ENCODE measurements at regions of chr14 and their contacts with region 1.

Region 1: DNA sequence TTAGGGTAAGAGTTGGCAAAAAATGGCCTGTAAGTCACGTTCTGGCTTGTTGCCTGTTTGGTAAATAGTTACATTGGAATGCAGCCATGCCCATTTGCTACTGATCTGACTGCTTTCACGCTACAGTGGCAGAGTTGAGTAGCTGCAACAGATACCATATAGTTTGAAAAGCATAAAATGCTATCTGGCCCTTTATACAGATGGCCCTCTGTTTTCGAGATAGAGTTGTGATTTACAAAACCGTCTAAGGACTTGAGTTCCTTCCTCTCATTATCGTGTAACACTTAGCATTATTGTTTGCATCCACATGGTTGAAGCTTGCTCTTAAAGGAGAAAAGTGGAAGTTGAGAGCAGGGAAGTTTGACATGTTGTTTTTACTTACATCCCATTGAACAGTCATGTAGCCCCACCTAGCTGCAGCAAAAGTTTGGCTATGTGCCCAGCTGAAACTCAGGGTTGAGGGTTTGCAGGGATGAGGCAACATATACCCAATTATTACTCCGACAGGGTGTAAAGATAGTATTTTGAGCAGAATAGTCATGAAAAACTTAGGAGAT is 11.3 kb upstream of the SCFD1 start:
- DNase-seq: peak; percentile 66
- H3K4me3 Mint-ChIP-seq: no peak overlapping the region
- H3K27ac Mint-ChIP-seq: no peak overlapping the region
- H3K4me1 Mint-ChIP-seq: peaks cover 38% of the 10 kb centered on the region
- H3K27me3 Mint-ChIP-seq: no peaks in the 10 kb centered on the region
- CTCF ChIP-seq: no peak

Region 2: GRCh38 chr14:30375296-30375892 is 235.5 kb before region 1 on chr14:
- CTCF ChIA-PET with region 1: no interaction called
- intact Hi-C with region 1: loop called (anchors 2 kb)
- DNase-seq: peak; percentile 67
- H3K4me3 Mint-ChIP-seq: no peak overlapping the region
- H3K27ac Mint-ChIP-seq: no peak overlapping the region
- H3K4me1 Mint-ChIP-seq: no peaks in the 10 kb centered on the region
- H3K27me3 Mint-ChIP-seq: peaks cover 64% of the 10 kb centered on the region
- CTCF ChIP-seq: peak; percentile 62

Region 3: DNA sequence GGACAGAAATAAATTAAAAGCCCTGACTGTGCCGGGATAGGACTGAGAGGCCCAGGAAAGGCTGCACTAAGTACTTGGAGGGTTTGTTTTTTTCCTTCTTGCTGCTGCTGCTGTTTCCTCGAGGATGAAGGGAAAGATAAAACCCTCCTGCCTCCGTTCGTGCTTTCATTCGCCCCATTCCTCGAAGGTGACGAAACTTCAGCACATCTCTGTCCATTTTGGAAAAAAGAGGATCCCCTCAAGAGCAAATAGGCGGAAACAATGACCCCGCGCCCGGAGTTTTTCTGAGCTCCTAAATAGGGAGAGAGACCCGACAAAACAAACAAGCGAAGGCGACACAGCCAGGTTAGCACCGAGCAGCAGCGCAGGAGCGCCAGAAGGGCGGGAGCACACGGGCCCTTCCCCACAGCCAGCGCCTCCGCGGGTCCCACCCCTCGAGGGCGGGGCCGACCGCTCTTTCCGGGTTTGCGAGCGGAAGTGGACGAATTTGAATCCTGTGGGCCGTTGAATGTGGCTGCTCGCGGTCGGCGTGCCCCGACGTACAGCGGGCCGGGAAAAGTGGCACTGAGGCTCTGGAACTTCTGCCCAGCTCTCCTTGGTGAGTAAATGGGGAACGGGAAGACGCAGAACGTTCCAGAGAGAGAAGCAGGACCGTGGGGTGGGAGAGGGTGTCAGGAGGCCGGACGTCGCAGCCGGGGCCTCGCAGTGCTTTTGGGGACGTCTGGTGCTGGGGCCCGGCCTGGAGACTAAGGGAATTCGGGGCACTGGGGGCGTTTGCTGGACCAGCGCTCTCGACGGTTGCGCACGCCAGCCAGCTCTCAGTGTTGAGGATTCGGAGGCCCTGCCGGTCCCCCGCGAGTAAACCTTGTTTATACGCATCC is 52.0 kb before region 1 on chr14 and contains the start of gene G2E3:
- CTCF ChIA-PET with region 1: no interaction called
- intact Hi-C with region 1: loop called (anchors 5 kb)
- DNase-seq: peak; percentile 91
- H3K4me3 Mint-ChIP-seq: peak within 1 kb of the TSS; percentile 98
- H3K27ac Mint-ChIP-seq: peak within 1 kb of the TSS; percentile 87
- H3K4me1 Mint-ChIP-seq: peaks cover 19% of the 10 kb centered on the region
- H3K27me3 Mint-ChIP-seq: no peaks in the 10 kb centered on the region
- CTCF ChIP-seq: no peak
- total RNA-seq, gene G2E3: 27.7 and 31.3 TPM in 2 replicates

Region 4: GRCh38 chr14:30621940-30622830 is 11.3 kb after region 1 on chr14 and contains the start of gene SCFD1:
- CTCF ChIA-PET with region 1: interaction called, 12 read pairs
- intact Hi-C with region 1: no loop called
- DNase-seq: peak; percentile 96
- H3K4me3 Mint-ChIP-seq: peak within 1 kb of the TSS; percentile 89
- H3K27ac Mint-ChIP-seq: peak within 1 kb of the TSS; percentile 96
- H3K4me1 Mint-ChIP-seq: peaks cover 15% of the 10 kb centered on the region
- H3K27me3 Mint-ChIP-seq: no peaks in the 10 kb centered on the region
- CTCF ChIP-seq: no peak
- total RNA-seq, gene SCFD1: 50.5 and 69.1 TPM in 2 replicates

Measured in Calu3 (cell line).